ENCODE measurements at regions of chr6 and their contacts with region 1.

Region 1: DNA sequence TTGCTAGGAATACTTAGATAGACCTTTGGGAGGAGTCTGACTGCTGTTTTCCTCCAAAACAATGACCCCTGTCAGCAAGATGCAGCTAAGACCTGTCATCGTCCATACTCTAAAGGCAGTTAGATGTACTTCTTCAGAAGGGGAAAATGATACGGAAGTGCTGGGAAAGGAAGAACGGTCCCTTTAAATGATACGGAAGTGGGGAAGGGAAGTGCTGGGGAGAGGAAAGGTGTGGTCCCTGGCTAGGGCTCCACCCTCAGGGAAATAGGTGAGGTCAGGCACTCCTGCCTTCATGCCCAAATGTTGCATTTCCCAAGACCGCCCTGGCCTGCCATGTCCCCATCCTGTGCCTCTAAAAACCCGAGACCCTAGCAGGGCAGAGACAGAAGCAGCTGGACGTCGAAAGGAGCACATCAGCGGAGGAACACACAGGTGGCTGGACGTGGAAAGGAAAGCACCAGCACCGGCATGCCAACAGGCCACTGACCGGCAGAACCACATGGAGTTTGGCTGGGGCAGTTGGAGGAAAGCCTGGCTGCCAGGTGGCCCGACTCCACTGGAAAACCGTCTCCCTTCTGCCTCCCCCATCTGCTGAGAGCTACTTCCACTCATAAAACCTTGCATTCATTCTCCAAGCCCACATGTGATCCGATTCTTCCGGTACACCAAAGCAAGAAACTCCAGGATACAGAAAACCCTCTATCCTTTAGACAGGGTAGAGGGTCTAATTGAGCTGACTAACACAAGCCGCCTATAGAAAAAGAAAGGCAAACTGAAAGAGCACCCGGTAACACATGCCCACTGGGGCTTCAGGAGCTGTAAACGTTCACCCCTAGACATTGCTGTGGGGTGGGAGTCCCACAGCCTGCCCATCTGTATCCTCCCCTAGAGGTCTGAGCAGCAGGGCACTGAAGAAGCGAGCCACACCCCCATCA is 94.6 kb downstream of the FAXC start:
- DNase-seq: no peak
- ATAC-seq: no peak
- H3K4me3 ChIP-seq: no peak overlapping the region
- H3K4me3 Mint-ChIP-seq: no peak overlapping the region
- H3K27ac ChIP-seq: no peak overlapping the region
- H3K27ac Mint-ChIP-seq: no peak overlapping the region
- H3K4me1 ChIP-seq: no peaks in the 10 kb centered on the region
- H3K4me1 Mint-ChIP-seq: no peaks in the 10 kb centered on the region
- H3K27me3 ChIP-seq: no peaks in the 10 kb centered on the region
- H3K27me3 Mint-ChIP-seq: no peaks in the 10 kb centered on the region
- CTCF ChIP-seq: no peak

Region 2: GRCh38 chr6:99269207-99269606 is 14.3 kb after region 1 on chr6:
- CTCF ChIA-PET with region 1: no interaction called
- POLR2A ChIA-PET with region 1: no interaction called
- intact Hi-C with region 1: loop called in 1 of 2 experiments (anchors 1 kb)
- DNase-seq: no peak
- ATAC-seq: no peak
- H3K4me3 ChIP-seq: no peak overlapping the region
- H3K4me3 Mint-ChIP-seq: no peak overlapping the region
- H3K27ac ChIP-seq: no peak overlapping the region
- H3K27ac Mint-ChIP-seq: no peak overlapping the region
- H3K4me1 ChIP-seq: no peaks in the 10 kb centered on the region
- H3K4me1 Mint-ChIP-seq: no peaks in the 10 kb centered on the region
- H3K27me3 ChIP-seq: peaks cover 0 to 5% of the 10 kb centered on the region in 2 experiments
- H3K27me3 Mint-ChIP-seq: peaks cover 4% of the 10 kb centered on the region
- CTCF ChIP-seq: no peak

Measured in CD8-positive, alpha-beta T cell (primary cell).